AG04450 (cell line): ENCODE measurements at regions of chr11 and their contacts with region 1.

Region 1: GRCh38 chr11:27720277-27720830 is 20.1 kb upstream of the BDNF start:
- DNase-seq: no peak
- H3K4me3 ChIP-seq: peak overlapping the region; percentile 84
- H3K27ac ChIP-seq: no peak overlapping the region
- H3K27me3 ChIP-seq: no peaks in the 10 kb centered on the region
- CTCF ChIP-seq: peak; percentile 40

Region 2: GRCh38 chr11:27688076-27688475 is 32.3 kb before region 1 on chr11:
- CTCF ChIA-PET with region 1: no interaction called
- POLR2A ChIA-PET with region 1: no interaction called
- DNase-seq: no peak
- H3K4me3 ChIP-seq: no peak overlapping the region
- H3K27ac ChIP-seq: peak overlapping the region; percentile 39
- H3K27me3 ChIP-seq: no peaks in the 10 kb centered on the region
- CTCF ChIP-seq: no peak

Region 3: DNA sequence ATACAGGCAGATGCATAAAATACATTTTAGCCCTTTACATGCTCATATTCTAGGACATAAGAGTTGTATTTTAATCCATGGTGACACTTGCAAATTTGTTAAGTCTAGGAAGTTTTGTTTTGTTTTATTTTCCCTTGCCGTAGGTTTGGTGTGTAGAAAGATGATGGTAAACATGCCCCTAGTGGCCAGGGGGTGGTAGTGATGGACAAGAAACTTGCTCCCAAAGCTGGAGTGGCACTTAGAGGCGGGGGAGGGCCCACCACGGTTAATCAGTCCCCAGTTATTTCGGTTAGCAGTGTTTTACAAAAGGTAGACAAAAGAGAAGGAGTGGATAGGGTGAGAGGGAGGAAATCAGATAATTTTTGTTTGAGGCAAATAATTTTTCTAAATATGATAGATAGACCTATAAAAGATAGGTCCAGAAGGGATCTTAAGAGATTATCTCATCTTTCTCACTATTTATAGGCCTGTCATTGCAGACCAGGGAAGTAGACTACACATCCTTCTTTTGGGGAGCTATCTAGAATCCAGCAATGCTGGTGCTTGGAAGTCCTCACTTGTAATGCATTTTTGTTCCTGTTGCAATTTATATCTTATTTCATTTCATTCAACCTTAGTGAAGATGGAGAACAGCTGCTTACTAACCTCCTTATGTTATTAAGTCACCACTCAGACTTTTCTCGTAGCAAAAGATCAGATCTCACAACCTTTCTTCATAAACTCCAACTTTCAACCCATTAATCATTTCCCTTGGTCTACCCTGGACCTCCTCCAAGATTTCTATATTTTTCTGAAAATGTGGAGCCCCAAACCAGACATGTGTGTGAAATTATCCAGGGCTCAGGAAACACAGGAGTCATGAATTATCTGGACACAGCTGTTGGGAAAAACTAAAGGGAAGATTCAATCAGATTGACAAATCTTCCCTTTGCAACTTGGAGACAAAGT is 14.2 kb before region 1 on chr11:
- CTCF ChIA-PET with region 1: interaction called, 54 read pairs
- POLR2A ChIA-PET with region 1: interaction called, 26 read pairs
- DNase-seq: no peak
- H3K4me3 ChIP-seq: no peak overlapping the region
- H3K27ac ChIP-seq: no peak overlapping the region
- H3K27me3 ChIP-seq: no peaks in the 10 kb centered on the region
- CTCF ChIP-seq: peak; percentile 67

Region 4: GRCh38 chr11:28107748-28108618 is 387.6 kb after region 1 on chr11 and contains the starts of genes KIF18A and METTL15:
- CTCF ChIA-PET with region 1: interaction called, 5 read pairs
- POLR2A ChIA-PET with region 1: interaction called, 12 read pairs
- DNase-seq: peak; percentile 97
- H3K4me3 ChIP-seq: peak within 1 kb of the TSS; percentile 74
- H3K27ac ChIP-seq: peak within 1 kb of the TSS; percentile 83
- H3K27me3 ChIP-seq: no peaks in the 10 kb centered on the region
- CTCF ChIP-seq: no peak
- polyA plus RNA-seq, gene KIF18A: 5.4 and 8.9 TPM in 2 replicates
- polyA plus RNA-seq, gene METTL15: 11.1 and 15.2 TPM in 2 replicates